ENCODE measurements at regions of chr5 and their contacts with region 1.

Region 1: DNA sequence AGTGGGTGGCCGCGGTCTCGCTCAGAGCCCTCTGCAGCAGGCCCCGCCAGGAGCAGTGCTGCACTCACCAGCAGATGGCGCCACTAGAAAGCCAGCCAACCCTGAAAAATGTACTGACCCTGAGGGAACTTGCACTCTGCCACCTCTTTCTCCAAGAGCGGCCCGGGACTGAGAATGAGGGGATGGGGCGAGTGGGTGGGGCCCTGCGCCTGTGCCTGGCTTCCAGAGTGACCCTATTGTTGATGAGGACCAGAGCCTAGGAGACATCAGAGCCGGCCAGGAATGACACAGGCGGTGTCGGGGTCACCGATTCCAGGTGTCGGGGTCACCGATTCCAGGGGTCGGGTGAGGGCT is 2.9 kb upstream of the IL17B start:
- DNase-seq: peak; percentile 88
- ATAC-seq: peak; percentile 78

Region 2: DNA sequence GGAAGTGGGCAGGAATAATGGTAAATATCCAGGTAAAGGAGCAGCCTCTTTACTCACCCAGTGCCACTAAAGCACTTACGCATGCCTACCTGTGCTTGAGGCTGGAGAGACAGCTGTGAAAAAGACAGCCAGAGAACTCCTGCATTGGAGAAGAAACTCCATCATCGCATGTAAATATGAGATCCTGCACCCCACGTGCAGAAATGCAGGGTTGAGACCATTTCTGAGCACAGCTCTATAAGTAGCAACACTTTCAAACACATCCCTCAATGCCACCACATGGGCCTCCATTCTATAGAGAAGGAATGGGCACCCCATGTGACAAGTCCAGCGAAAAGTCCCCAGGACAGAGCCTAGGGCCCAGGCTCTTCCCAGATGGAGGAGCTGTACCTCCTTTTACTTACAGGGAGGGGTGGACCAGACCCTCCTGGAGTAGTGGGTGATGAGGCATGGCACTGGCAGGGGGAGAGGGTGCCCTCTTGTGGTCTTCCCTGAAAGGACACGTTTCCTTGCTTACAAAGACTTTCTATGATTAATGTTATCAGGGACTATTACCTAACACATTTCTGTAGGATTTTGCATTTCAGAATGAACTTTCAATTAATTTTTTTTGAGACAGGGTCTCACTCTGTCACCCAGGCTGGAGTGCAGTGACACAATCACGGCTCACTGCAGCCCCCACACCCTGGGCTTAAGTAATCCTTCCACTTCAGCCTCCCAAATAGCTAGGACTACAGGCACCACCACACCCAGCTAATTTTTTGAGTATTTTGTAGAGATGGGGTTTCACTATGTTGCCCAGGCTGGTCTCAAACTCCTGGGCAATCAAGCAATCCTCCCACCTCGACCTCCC is 52.4 kb after region 1 on chr5:
- intact Hi-C with region 1: loop called (anchors 2 kb)
- DNase-seq: no peak
- ATAC-seq: peak; percentile 22